ENCODE measurements at regions of chr11 and their contacts with region 1.

Region 1: DNA sequence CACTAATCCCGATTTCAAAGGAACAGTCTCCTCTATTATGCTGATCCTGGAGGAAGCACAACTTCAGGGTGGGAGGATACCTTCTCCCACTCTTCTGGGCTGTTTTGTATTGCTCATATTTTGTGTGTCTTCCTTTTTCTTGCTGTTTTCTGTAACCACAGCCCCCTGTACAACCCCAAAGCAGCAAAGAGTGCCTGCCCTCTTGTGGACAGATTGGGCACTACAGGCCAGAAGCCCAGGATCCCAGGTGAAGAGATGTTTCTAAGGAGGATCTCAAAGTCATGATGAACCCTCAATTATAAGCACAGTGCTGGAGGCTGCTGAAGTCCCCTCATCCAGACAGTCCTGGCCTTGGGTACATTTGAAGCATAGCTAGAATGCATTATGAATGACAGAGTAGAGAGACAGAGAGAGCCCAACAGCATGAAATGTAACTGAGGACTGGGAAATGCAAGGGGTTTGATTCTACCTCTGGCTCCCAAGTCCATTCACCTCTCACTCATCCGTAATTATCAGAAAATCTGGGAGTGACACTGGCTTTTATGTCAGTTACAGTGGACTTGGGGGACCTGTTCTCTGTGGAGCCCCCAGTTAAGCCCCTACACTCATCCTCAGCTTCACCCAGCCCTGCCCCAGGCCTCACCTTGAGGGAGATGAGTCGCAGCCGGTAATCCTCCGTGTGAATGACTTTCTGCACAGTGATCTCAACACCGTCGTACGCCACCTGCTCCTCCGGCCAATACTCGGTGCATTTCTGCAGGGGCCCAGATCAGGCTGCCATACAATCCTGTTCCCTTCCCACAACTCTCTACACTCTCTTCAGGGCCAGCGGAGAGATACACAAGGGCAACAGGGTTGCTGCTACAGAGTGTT is 6.2 kb upstream of the IGSF22 start:
- DNase-seq: no peak
- H3K4me3 ChIP-seq: no peak overlapping the region
- H3K27ac ChIP-seq: no peak overlapping the region
- H3K27me3 ChIP-seq: peaks cover 5% of the 10 kb centered on the region
- CTCF ChIP-seq: peak; percentile 98

Region 2: GRCh38 chr11:18540207-18541009 is 191.8 kb before region 1 on chr11:
- CTCF ChIA-PET with region 1: interaction called, 13 read pairs
- POLR2A ChIA-PET with region 1: no interaction called
- DNase-seq: no peak
- H3K4me3 ChIP-seq: no peak overlapping the region
- H3K27ac ChIP-seq: no peak overlapping the region
- H3K27me3 ChIP-seq: no peaks in the 10 kb centered on the region
- CTCF ChIP-seq: peak; percentile 50

Region 3: DNA sequence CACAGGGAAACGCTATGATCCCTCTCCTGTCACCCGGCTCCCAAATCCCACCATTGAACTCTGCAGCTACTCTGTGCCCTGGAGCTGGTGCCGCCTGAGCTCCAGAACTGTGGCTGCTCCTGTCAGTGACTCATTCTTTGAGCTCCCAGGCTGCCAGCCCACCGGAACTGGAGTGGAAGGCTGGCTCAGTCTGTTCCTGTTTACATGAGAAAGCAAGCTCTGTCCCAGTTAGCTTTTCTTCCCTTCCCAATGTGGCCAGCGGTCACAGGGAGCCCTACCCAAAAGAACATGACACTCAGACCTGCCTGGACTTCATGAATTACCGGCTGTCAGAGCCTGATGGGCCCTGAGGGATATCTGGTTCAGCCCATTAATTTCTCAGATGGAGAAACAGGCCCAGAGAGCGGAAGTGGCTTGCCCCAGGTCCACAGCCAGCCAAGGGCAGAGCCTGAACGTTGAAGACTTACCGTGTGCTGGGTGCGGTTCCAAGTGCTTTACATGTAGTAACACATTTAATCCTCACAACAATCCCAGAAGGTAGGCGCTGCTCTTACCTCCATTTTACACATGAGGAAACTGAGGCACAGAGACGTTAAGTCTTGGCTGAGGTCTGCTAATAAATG is 17.6 kb after region 1 on chr11:
- CTCF ChIA-PET with region 1: interaction called, 18 read pairs
- POLR2A ChIA-PET with region 1: no interaction called
- DNase-seq: peak; percentile 29
- H3K4me3 ChIP-seq: no peak overlapping the region
- H3K27ac ChIP-seq: peak overlapping the region; percentile 57
- H3K27me3 ChIP-seq: no peaks in the 10 kb centered on the region
- CTCF ChIP-seq: no peak

Region 4: GRCh38 chr11:18757811-18758210 is 25.6 kb after region 1 on chr11:
- CTCF ChIA-PET with region 1: interaction called, 48 read pairs
- POLR2A ChIA-PET with region 1: no interaction called
- DNase-seq: peak; percentile 11
- H3K4me3 ChIP-seq: no peak overlapping the region
- H3K27ac ChIP-seq: no peak overlapping the region
- H3K27me3 ChIP-seq: no peaks in the 10 kb centered on the region
- CTCF ChIP-seq: no peak

Region 5: GRCh38 chr11:18768472-18768901 is 36.3 kb after region 1 on chr11:
- CTCF ChIA-PET with region 1: interaction called, 48 read pairs
- POLR2A ChIA-PET with region 1: no interaction called
- DNase-seq: no peak
- H3K4me3 ChIP-seq: no peak overlapping the region
- H3K27ac ChIP-seq: no peak overlapping the region
- H3K27me3 ChIP-seq: peaks cover 11% of the 10 kb centered on the region
- CTCF ChIP-seq: no peak

Region 6: GRCh38 chr11:18790883-18791206 is 58.7 kb after region 1 on chr11:
- CTCF ChIA-PET with region 1: no interaction called
- POLR2A ChIA-PET with region 1: no interaction called
- DNase-seq: no peak
- H3K4me3 ChIP-seq: no peak overlapping the region
- H3K27ac ChIP-seq: no peak overlapping the region
- H3K27me3 ChIP-seq: peaks cover 40% of the 10 kb centered on the region
- CTCF ChIP-seq: no peak